Cardiac septum (tissue), 1 donor: ENCODE measurements at regions of chr14 and their contacts with region 1.

Region 1: GRCh38 chr14:59189786-59190771 is 1.6 kb downstream of the DAAM1 start:
- DNase-seq: peak; percentile 89

Region 2: GRCh38 chr14:59126710-59127432 is 63.2 kb before region 1 on chr14:
- intact Hi-C with region 1: loop called (anchors 5 kb)
- DNase-seq: no peak

Region 3: DNA sequence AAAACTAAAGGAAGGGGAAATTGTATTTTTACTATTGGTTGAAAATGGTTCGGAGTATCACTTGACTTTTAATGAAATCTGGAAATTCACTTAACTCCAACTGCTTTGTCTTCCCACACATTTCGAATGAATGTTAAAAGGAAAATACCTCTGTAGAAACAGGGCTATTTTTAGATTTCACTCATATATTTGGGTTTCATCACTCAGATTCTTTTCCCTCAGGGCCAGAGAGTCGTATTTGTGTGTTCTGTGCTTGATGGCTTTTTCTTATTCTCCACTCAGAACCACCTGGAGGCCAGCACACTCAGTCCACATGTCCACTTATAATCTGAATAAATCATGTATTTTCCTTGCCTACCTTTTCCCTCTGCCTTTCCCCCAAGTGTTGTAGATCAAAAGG is 38.3 kb after region 1 on chr14:
- intact Hi-C with region 1: loop called (anchors 5 kb)
- DNase-seq: no peak

Region 4: DNA sequence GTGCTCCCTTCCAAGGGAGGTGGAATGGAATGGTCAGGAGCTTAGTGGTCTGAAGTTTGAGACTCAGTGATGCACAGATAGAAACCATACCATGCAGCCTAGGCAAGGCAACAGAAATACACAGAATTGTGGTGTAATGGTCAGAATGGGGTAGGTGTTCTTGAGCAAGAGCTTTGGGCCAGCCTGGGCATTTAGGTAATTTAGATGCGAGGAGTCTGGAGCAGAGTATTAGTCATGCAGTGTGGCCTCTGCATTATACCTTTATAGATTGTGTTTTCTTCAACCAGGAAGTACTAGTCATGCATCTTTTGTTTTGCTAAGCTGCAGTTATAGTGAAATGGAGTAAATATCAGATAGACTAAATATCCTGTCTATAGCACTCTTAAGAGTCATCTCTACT is 116.7 kb after region 1 on chr14:
- intact Hi-C with region 1: loop called (anchors 5 kb)
- DNase-seq: no peak

Region 5: DNA sequence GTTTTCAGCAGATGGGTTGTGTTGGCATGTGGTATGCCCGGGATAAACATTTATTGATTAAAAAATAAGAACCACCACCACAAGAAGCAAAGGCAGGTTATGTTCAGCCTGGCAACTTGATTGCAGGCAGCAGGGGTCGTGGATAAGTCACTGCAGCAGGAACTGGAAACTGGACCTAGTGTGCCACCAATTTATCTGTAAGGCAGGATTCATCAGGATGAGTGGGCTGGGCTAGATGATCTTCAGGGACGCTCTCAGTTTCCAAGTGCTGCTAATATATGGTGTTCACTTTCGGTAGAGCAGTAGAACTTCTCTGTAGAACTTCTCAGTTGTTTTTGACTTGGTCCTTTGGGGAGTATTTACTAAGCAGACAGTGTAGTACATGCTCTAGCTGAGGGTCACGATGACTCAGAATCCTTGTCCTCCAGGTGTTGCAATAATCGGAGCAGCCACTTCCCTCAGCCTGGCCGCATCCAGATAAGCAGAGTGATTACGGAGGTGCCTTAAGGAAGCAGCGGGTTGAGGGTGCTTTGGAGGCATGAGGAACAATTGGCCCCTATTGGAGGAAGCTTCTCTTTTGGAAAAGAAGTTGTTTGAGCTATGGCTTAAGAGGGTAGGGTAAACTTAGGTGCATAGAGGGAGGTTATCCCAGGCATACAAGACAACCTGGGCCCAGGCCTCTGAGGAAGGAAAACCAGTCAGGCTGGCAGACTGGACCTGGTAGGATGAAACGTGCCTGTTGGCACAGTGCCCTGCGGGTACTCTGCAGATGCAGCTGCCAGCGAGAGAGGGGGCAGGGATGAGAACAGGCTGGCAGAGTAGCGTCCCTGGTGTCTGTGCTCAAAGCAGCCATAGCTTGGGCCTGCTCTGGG is 171.1 kb after region 1 on chr14:
- intact Hi-C with region 1: loop called (anchors 5 kb)
- DNase-seq: peak; percentile 87

Region 6: DNA sequence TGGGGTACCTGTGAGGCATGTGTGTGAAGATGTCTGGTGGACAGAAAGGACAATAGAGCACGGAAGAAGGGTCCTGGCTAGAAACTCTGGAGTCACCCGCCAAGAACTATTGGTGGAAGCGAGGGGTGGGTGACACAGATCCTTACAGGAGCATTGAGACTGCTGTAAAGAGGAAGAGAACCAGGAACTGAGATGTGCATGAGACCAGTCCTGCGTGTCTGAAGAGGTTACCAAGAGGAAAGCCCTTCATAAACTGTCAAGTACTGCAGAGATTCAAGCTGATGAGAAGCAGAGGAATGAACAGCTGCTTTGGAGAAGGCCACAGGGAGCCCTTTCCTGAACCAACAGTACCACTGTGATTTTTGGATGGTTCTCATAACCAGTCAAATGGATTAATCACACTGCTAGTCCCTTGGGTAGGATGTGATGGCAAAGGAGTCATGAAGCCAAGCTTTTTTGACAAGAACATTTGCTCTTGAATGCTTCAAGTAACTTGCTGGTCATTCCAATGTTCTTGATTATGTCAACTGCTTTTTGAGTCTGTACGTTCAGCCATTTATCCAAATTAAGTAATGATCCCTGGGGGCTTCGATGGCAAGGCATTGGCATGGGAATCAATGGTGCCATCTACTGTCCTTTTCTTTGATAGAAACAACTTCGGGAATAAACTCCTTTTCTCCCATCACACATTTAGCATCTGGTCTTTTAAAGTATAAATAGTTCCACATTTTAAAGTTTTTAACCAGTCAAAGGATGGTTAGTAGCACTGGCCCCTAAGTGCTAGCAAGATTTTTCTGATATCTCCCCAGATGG is 232.2 kb after region 1 on chr14:
- intact Hi-C with region 1: loop called (anchors 2 kb)
- DNase-seq: no peak